ENCODE measurements at regions of chr12 and their contacts with region 1.

Region 1: GRCh38 chr12:53508534-53509199 is 1.4 kb upstream of the NPFF start:
- DNase-seq: peak; percentile 93
- H3K4me3 Mint-ChIP-seq: no peak overlapping the region
- H3K27ac Mint-ChIP-seq: peak overlapping the region; percentile 10
- H3K4me1 Mint-ChIP-seq: peaks cover 11% of the 10 kb centered on the region
- H3K27me3 Mint-ChIP-seq: no peaks in the 10 kb centered on the region

Region 2: DNA sequence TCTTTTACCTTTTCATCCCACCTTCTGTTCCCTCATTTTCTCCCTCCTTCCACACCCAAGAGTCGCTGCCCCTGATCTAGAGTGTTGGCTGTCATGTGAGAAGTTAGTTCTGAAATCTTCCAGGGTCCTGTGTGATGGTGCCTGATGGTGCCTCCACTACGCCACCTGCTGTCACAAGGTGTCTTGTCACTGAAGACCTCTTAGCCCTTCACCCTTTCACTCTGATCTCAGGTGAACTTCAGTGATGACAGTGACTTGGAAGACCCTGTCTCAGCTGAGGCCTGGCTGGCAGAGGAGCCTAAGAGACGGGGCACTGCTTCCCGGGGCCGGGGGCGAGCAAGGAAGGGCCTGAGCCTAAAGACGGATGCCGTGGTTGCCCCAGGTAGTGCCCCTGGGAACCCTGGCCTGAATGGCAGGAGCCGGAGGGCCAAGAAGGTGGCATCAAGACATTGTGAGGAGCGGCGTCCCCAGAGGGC is 220.9 kb before region 1 on chr12:
- CTCF ChIA-PET with region 1: no interaction called
- intact Hi-C with region 1: no loop called
- DNase-seq: peak; percentile 77
- H3K4me3 Mint-ChIP-seq: no peak overlapping the region
- H3K27ac Mint-ChIP-seq: peak overlapping the region; percentile 32
- H3K4me1 Mint-ChIP-seq: peaks cover 23% of the 10 kb centered on the region
- H3K27me3 Mint-ChIP-seq: no peaks in the 10 kb centered on the region

Region 3: DNA sequence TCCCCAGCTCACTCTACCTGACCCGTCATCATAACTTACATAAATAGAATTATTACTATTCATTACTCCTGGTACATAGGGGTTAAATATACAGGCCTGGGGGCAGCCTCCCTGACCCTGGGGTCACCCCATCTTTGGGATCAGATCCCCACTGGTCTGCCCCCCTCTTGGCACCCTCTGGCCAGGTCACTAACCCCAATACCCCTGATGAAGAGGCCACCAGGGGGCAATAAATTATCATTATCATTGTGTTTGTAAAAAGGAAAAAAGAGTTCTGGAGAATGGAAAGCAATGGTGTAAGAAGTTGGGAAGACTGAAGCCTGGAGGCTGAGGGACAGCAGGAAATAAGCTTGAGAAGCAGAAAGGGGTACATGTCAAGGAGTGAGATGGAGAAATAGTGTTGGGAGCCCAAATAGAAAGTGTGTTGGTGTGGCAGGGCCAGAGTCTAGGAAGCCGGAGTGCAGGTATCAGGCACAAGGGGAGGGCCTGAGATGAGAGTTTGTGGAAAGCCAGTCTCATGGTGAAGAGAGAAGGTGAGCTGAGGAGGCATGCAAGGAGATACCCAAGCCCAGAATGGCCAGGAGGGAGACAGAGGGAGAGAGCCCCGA is 181.1 kb before region 1 on chr12:
- CTCF ChIA-PET with region 1: interaction called, 14 read pairs
- intact Hi-C with region 1: loop called (anchors 1 kb)
- DNase-seq: peak; percentile 15
- H3K4me3 Mint-ChIP-seq: no peak overlapping the region
- H3K27ac Mint-ChIP-seq: no peak overlapping the region
- H3K4me1 Mint-ChIP-seq: peaks cover 15% of the 10 kb centered on the region
- H3K27me3 Mint-ChIP-seq: peaks cover 2% of the 10 kb centered on the region

Region 4: DNA sequence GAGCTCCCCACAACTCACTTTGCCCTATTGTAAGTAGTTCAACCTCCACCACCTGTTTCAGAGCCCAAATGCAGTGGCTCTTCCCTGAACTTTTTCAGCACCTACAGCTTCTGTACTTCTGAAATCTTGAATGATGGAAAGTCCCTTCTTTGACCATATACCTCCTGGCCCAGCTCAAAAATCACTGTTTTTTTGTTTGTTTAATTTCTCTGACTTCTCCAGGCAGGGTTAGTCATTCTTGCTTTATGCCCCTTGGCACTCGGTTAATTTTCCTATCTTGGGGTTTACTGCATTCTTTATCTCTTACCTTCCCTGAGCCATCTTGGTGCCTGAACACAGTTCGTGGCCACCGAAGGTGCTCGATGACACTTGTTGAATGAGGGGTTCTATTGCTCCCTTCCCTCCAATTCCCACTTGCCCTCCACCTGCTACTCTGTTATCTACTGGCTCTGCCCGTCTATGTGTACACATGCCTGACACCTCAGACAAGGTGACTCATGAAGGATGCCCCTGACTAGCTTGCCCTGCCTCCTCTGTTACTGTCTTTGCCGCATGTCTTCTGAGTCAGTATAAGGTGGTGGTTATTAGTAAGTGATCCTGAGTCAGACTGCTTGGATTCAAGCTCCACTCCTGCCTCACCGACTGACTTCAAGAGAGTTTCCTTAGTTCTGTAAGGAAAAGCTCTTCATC is 80.6 kb before region 1 on chr12:
- CTCF ChIA-PET with region 1: interaction called, 16 read pairs
- intact Hi-C with region 1: no loop called
- DNase-seq: peak; percentile 63
- H3K4me3 Mint-ChIP-seq: no peak overlapping the region
- H3K27ac Mint-ChIP-seq: no peak overlapping the region
- H3K4me1 Mint-ChIP-seq: peaks cover 11% of the 10 kb centered on the region
- H3K27me3 Mint-ChIP-seq: no peaks in the 10 kb centered on the region

Region 5: GRCh38 chr12:53476769-53477209 is 31.9 kb before region 1 on chr12:
- CTCF ChIA-PET with region 1: interaction called, 40 read pairs
- intact Hi-C with region 1: no loop called
- DNase-seq: no peak
- H3K4me3 Mint-ChIP-seq: no peak overlapping the region
- H3K27ac Mint-ChIP-seq: peak overlapping the region; percentile 27
- H3K4me1 Mint-ChIP-seq: peaks cover 51% of the 10 kb centered on the region
- H3K27me3 Mint-ChIP-seq: no peaks in the 10 kb centered on the region

Region 6: DNA sequence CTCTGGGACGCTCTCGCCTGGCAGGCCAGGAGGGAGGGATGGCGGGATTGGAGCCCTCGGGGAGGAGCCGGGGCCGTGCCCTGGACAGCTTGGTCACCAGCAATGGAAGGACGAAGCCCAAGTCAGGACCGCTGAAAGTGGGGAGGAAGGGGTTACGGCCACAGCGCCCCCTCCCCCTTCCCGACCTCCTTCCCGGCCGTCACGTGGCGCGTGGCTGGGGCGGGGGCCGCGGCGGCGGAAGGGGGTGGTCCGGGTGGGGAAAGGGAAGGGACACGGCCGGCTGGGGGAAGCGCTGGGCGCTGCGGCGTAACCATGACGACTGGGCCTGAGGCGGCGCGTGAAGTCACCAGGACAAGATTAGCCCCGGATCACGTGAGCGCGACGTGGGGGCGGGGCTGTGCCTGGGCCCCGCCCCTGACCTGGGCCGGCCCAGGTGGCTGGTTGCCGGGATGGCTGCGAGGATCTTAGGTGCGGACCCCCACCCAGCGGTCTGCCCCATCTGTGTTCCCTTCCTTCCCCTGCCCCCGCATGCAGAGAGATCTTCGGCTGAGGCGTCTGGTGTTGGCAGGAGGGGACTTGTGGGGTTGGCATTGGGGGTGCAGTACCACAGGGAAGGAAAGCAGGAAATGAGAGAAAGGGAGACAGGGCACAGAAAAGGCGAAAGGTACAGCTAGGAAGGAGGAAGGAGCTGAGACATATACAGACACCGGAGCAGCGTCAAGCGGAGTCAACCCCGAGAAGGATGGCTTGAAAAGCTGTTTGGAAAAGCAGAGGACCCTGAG is 15.6 kb before region 1 on chr12:
- CTCF ChIA-PET with region 1: interaction called, 15 read pairs
- intact Hi-C with region 1: loop called (anchors 1 kb)
- DNase-seq: peak; percentile 90
- H3K4me3 Mint-ChIP-seq: peak overlapping the region; percentile 88
- H3K27ac Mint-ChIP-seq: peak overlapping the region; percentile 81
- H3K4me1 Mint-ChIP-seq: peaks cover 26% of the 10 kb centered on the region
- H3K27me3 Mint-ChIP-seq: no peaks in the 10 kb centered on the region

Region 7: GRCh38 chr12:53523131-53523530 is 14.5 kb after region 1 on chr12:
- CTCF ChIA-PET with region 1: interaction called, 21 read pairs
- intact Hi-C with region 1: no loop called
- DNase-seq: no peak
- H3K4me3 Mint-ChIP-seq: no peak overlapping the region
- H3K27ac Mint-ChIP-seq: no peak overlapping the region
- H3K4me1 Mint-ChIP-seq: no peaks in the 10 kb centered on the region
- H3K27me3 Mint-ChIP-seq: no peaks in the 10 kb centered on the region

Measured in activated naive CD4-positive, alpha-beta T cell treated with anti-CD3 and anti-CD28 coated beads for 36 hours (primary cell).